Testis (tissue), 5 donors: ENCODE measurements at regions of chr2 and their contacts with region 1.

Region 1: GRCh38 chr2:163291790-163292189 is 444.0 kb downstream of the FIGN start:
- DNase-seq: no peak
- H3K4me3 ChIP-seq: no peak overlapping the region
- H3K27ac ChIP-seq: no peak overlapping the region
- H3K4me1 ChIP-seq: no peaks in the 10 kb centered on the region
- H3K27me3 ChIP-seq: no peaks in the 10 kb centered on the region
- CTCF ChIP-seq: no peak
- POLR2A ChIP-seq: no peak

Region 2: DNA sequence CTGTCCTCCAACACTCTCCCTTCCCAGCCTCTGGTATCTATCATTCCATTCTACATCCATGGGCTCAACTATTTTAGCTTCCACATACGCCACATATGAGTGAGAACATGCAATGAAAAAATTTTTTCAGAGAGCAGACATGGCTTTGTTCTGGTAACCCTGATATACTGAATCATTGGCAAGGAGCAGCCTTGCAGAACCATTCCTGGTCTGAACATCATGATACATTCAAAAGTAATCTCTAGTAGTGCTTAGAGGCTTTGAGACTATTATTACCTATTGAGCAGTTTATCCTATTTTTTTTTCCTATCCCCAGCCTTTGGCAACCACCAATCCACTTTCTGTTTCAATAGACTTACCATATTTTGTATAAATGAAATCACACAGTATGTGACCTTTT is 60.1 kb before region 1 on chr2:
- intact Hi-C with region 1: loop called (anchors 5 kb)
- DNase-seq: no peak
- H3K4me3 ChIP-seq: no peak overlapping the region
- H3K27ac ChIP-seq: no peak overlapping the region
- H3K4me1 ChIP-seq: no peaks in the 10 kb centered on the region
- H3K27me3 ChIP-seq: no peaks in the 10 kb centered on the region
- CTCF ChIP-seq: no peak
- POLR2A ChIP-seq: no peak

Region 3: DNA sequence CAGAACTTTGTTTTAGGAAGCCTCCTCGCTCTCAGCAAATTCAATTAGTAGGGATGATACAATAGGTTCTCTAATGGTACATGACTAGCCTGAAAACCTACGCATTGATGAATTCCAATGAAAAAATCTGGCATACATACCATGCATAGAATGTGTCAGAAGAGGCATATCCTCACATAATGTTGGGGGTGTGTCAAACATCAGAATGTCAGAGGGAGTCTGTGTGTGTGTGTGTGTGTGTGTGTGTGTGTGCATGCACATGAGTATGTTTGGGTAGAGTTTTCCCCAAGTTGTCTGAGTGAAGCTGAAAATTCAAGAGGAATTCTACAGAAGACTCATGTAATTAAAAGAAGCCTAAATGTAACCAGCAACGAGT is 365.5 kb after region 1 on chr2:
- intact Hi-C with region 1: no loop called
- DNase-seq: no peak
- H3K4me3 ChIP-seq: no peak overlapping the region
- H3K27ac ChIP-seq: no peak overlapping the region
- H3K4me1 ChIP-seq: no peaks in the 10 kb centered on the region
- H3K27me3 ChIP-seq: no peaks in the 10 kb centered on the region
- CTCF ChIP-seq: no peak
- POLR2A ChIP-seq: no peak